Activated CD8-positive, alpha-beta T cell treated with anti-CD3 and anti-CD28 coated beads, Interleukin-2, amount 10 ng/mL, durations not matched to agents 7 days and 5 days (primary cell): ENCODE measurements at regions of chr15 and their contacts with region 1.

Region 1: DNA sequence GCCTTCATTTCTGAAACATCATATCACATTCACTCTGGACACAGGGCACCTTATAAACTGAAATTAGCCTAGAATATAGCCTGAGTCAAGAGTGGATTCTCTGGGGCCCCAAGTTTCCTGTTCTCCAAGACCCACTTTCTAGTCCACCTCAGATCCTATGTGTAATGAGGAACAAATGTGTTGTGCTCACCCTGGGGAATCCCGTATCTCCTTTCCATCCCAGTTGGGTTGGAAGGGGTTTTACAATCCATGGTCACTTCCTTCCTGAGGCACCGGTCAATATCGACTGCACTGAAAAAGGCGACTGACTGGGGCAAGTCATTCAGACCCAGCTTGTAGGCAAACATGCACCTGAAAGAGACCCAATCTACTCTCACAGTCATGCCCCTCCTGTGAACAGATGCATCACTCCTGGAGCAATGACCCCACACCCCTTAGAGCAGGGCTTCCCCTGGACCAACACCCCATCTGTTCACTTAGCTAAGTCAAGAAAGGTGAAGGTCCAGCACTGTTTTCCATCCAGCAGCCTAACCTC is 17.4 kb downstream of the POLG start:
- DNase-seq: no peak
- ATAC-seq: no peak
- H3K4me3 Mint-ChIP-seq: no peak overlapping the region
- H3K27ac Mint-ChIP-seq: peak overlapping the region; percentile 70
- H3K4me1 Mint-ChIP-seq: peaks cover 16% of the 10 kb centered on the region
- H3K27me3 Mint-ChIP-seq: no peaks in the 10 kb centered on the region

Region 2: DNA sequence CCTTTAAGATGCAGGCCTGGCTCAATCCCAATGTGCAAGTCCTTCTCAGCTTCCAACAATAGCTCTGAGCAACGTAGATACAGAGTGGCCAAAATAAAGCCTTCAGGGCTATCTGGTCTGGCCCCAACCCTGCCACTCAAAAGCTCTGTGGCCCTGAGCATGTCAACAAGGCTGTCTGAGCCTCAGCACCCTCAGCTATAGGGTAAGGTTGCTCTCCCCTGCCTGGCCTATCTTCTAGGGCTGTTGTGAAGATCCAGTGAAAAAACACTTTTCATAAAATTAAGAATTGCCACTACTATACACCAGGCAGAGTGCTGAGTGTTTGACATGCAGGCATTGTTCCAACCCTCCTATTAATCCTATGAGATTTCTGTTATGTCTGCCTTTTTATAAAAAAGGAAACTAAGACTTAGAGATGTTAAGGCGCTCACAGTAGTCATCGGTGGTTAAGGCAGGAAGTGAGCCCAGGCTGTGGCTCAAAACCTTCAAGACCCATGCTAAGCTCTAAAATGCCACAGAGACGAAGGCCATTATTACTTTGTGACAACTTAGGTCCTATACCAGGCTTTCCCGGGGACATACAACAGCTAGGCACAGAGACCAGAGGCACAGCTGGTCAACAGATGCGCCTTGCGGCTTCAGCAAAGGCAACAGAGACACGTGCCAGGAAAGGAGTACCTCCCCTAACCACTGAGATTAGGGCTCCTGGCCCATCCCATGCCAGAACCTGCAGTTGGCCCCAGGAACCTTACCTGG is 12.3 kb after region 1 on chr15:
- CTCF ChIA-PET with region 1: interaction called, 7 read pairs
- POLR2A ChIA-PET with region 1: interaction called, 13 read pairs
- DNase-seq: peak; percentile 73
- ATAC-seq: peak; percentile 50
- H3K4me3 Mint-ChIP-seq: peak overlapping the region; percentile 75
- H3K27ac Mint-ChIP-seq: peak overlapping the region; percentile 86
- H3K4me1 Mint-ChIP-seq: peaks cover 51% of the 10 kb centered on the region
- H3K27me3 Mint-ChIP-seq: no peaks in the 10 kb centered on the region

Region 3: DNA sequence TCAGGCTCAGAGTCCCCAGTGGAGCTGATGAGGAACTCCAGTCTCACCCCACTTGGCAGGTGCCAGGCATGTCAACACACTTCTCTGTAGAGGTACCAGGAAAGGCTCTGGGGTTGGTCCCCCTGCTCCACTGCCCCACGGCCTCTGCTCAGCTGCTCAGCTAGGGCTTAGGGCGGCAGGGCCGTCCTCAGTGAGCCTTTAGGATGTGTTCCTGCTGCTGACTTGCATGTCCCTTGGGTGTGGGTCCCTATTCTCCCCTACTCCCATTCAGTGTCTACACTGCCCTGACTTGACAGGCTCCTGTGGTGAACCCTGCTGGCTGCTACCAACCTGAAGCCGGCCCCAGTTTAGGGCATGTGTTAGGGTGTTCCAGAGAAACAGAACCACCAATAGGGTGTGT is 35.2 kb after region 1 on chr15:
- CTCF ChIA-PET with region 1: no interaction called
- POLR2A ChIA-PET with region 1: no interaction called
- DNase-seq: no peak
- ATAC-seq: peak; percentile 39
- H3K4me3 Mint-ChIP-seq: no peak overlapping the region
- H3K27ac Mint-ChIP-seq: no peak overlapping the region
- H3K4me1 Mint-ChIP-seq: no peaks in the 10 kb centered on the region
- H3K27me3 Mint-ChIP-seq: peaks cover 40% of the 10 kb centered on the region